Right cardiac atrium (tissue), 5 donors: ENCODE measurements at regions of chr2 and their contacts with region 1.

Region 1: GRCh38 chr2:227766373-227766883 is 20.7 kb downstream of the SCYGR8 start:
- DNase-seq: peak; percentile 81 to 92 (median 87)
- ATAC-seq: peak; percentile 98 to 99
- H3K4me3 ChIP-seq: no peak overlapping the region
- H3K27ac ChIP-seq: no peak overlapping the region
- H3K4me1 ChIP-seq: no peaks in the 10 kb centered on the region
- H3K27me3 ChIP-seq: no peaks in the 10 kb centered on the region

Region 2: DNA sequence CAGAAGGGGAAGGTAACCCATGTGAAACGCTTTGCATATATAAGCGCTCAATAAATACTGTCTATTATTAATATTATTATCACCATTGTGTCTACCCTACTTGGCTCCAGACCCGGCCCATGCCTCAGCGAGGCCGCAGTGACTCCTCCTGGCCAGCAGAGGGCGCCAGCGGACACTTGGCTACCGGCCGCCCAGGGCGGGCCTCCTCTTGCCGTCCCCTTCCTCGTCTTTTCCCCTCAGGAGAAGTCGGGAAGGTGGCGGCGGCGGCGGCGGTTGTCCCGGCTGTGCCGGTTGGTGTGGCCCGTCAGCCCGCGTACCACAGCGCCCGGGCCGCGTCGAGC is 294.5 kb before region 1 on chr2 and contains the start of gene AGFG1:
- intact Hi-C with region 1: loop called in 2 of 4 experiments (anchors 5 to 10 kb)
- DNase-seq: peak; percentile 84 to 94 (median 93)
- ATAC-seq: peak; percentile 89 to 90
- H3K4me3 ChIP-seq: peak within 1 kb of the TSS; percentile 99
- H3K27ac ChIP-seq: peak within 1 kb of the TSS; percentile 87
- H3K4me1 ChIP-seq: peaks cover 2% of the 10 kb centered on the region
- H3K27me3 ChIP-seq: no peaks in the 10 kb centered on the region
- total RNA-seq, gene AGFG1: 41.2 to 65.3 (median 50.4) TPM

Region 3: GRCh38 chr2:227655454-227655853 is 111.0 kb before region 1 on chr2:
- intact Hi-C with region 1: loop called in 3 of 4 experiments (anchors 5 kb)
- DNase-seq: no peak
- ATAC-seq: peak; percentile 83 to 88
- H3K4me3 ChIP-seq: no peak overlapping the region
- H3K27ac ChIP-seq: no peak overlapping the region
- H3K4me1 ChIP-seq: peaks cover 2% of the 10 kb centered on the region
- H3K27me3 ChIP-seq: no peaks in the 10 kb centered on the region